Activated CD8-positive, alpha-beta T cell treated with anti-CD3 and anti-CD28 coated beads, Interleukin-2, amount 10 ng/mL, durations not matched to agents 7 days and 5 days (primary cell): ENCODE measurements at regions of chr3 and their contacts with region 1.

Region 1: GRCh38 chr3:143119009-143119914 is at the start of gene CHST2:
- DNase-seq: peak; percentile 79
- ATAC-seq: peak; percentile 84
- H3K4me3 Mint-ChIP-seq: peak within 1 kb of the TSS; percentile 85
- H3K27ac Mint-ChIP-seq: peak within 1 kb of the TSS; percentile 74
- H3K4me1 Mint-ChIP-seq: peaks cover 40% of the 10 kb centered on the region
- H3K27me3 Mint-ChIP-seq: peaks cover 10% of the 10 kb centered on the region
- total RNA-seq, gene CHST2: 2.3 to 2.4 TPM

Region 2: DNA sequence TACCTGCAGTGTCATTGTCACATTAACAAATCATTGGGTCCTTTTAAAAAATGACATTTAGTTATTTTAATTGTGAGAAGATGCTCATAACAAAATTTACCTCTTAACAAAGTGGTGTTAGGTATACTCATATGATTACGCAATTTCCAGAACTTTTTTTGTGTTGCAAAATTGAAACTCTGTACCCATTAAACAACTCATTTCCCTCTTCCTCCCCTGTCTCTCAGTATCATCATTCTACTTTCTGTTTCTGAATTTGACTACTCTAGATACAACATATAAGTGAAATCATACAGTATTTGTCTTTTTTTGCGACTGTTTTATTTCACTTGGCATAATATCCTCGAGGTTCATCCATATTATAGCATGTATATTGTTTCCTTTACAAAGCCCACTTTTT is 58.4 kb before region 1 on chr3:
- CTCF ChIA-PET with region 1: no interaction called
- POLR2A ChIA-PET with region 1: no interaction called
- DNase-seq: no peak
- ATAC-seq: peak; percentile 64
- H3K4me3 Mint-ChIP-seq: peak overlapping the region; percentile 1
- H3K27ac Mint-ChIP-seq: no peak overlapping the region
- H3K4me1 Mint-ChIP-seq: peaks cover 16% of the 10 kb centered on the region
- H3K27me3 Mint-ChIP-seq: no peaks in the 10 kb centered on the region

Region 3: GRCh38 chr3:143165211-143165610 is 45.9 kb after region 1 on chr3:
- CTCF ChIA-PET with region 1: interaction called, 23 read pairs
- POLR2A ChIA-PET with region 1: interaction called, 3 read pairs
- DNase-seq: no peak
- ATAC-seq: no peak
- H3K4me3 Mint-ChIP-seq: no peak overlapping the region
- H3K27ac Mint-ChIP-seq: peak overlapping the region; percentile 56
- H3K4me1 Mint-ChIP-seq: peaks cover 50% of the 10 kb centered on the region
- H3K27me3 Mint-ChIP-seq: no peaks in the 10 kb centered on the region

Region 4: DNA sequence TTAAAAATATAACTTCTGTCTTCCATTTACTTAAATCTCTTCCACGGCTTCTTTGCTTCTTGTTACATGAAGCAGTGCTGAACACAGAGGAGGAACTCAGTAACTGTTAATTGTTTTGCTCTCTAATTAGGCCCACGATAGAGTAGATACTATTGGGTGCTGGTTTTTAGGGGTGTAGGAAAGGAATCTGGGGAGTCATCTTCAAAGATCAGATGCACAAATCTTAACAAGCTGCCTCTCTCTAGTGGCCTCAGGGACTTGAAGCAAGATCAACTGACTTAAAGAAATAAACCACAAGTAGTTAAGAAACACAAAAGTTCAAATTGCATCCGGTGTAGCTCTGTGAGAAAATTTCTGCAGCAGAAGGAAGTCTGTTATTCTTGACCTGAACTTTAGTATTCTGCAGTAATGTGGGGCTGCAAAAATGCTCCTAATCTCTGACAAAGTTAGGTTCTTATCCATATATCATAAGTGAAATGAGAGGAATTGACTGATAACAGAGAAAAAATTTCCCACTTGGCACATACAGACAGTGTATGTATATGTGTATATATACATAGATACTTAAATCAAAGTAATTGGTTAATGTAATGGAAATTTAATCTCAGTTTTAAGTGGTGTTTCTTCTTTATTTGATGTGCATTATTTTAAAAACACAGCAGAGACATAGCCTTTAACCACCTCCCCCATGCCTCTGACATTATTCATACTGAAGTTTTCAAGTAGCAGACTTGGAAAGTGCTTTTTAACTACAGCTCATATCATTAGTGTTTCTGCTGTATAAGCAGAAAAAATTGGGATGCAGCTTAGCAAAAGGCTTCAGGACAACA is 52.1 kb after region 1 on chr3:
- CTCF ChIA-PET with region 1: interaction called, 23 read pairs
- POLR2A ChIA-PET with region 1: interaction called, 5 read pairs
- DNase-seq: peak; percentile 56
- ATAC-seq: peak; percentile 82
- H3K4me3 Mint-ChIP-seq: peak overlapping the region; percentile 62
- H3K27ac Mint-ChIP-seq: peak overlapping the region; percentile 96
- H3K4me1 Mint-ChIP-seq: peaks cover 56% of the 10 kb centered on the region
- H3K27me3 Mint-ChIP-seq: no peaks in the 10 kb centered on the region

Region 5: DNA sequence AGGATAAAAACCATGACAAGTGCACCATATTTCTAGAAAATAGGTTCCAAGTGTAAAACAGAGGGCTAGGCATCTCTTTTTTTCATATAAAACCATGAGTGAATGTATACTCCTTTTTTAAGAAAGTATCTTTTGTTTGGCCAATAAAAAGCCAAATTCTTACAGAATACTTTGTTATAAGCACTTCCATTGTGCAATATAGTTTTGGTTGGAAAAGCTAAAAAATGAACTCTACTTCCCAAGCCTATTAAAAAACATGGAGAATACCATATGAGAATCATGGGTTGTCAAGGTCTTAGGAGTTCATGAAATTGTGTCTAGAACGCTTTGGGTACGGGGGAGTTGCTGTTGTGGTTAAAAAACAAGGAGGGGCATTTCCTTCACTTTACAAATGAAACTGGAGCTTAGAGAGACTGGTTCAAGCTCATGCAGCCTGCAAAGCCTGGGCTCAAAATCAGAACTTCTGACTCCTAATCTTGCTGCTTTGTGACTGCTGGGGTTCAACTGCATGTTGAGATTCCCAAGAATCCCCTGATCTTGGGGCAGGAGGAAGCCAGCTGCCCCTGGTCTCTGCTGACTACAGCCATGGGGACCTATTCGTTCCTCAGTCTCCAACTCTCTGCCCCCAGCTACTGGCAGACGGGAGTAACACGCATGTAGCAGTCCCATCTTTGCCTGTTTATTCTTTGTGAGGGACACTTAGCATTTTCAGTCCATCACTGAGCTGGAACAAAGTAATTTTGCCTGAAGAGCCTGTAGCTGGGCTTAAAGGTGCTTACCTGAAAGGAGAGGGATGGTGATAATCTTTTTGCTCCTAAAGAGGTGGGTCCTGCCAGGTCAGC is 229.4 kb after region 1 on chr3:
- CTCF ChIA-PET with region 1: interaction called, 10 read pairs
- POLR2A ChIA-PET with region 1: interaction called, 4 read pairs
- DNase-seq: no peak
- ATAC-seq: peak; percentile 39
- H3K4me3 Mint-ChIP-seq: no peak overlapping the region
- H3K27ac Mint-ChIP-seq: no peak overlapping the region
- H3K4me1 Mint-ChIP-seq: peaks cover 19% of the 10 kb centered on the region
- H3K27me3 Mint-ChIP-seq: no peaks in the 10 kb centered on the region

Region 6: DNA sequence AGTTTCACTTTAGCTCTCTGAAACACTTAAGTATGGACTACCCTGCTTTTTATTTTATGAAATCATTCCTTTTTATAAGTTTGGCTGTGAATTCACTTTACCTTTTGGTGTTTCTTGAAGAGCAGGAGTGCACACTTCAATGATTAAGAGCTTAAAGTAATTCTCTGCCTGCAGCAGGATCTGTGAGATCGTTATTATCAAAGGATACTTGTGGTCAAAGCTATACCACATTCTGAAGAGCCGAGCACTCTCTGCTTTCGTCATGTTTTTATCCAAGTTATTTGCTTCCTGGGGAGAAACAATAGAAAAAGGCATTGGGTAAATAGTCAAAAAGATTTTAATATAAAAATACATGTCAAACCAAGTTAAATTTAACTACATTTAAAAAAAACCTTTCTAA is 244.0 kb after region 1 on chr3:
- CTCF ChIA-PET with region 1: interaction called, 11 read pairs
- POLR2A ChIA-PET with region 1: no interaction called
- DNase-seq: no peak
- ATAC-seq: peak; percentile 58
- H3K4me3 Mint-ChIP-seq: no peak overlapping the region
- H3K27ac Mint-ChIP-seq: no peak overlapping the region
- H3K4me1 Mint-ChIP-seq: peaks cover 24% of the 10 kb centered on the region
- H3K27me3 Mint-ChIP-seq: no peaks in the 10 kb centered on the region

Region 7: GRCh38 chr3:143674100-143674968 is 555.1 kb after region 1 on chr3:
- CTCF ChIA-PET with region 1: interaction called, 37 read pairs
- POLR2A ChIA-PET with region 1: no interaction called
- DNase-seq: peak; percentile 86
- ATAC-seq: peak; percentile 87
- H3K4me3 Mint-ChIP-seq: no peak overlapping the region
- H3K27ac Mint-ChIP-seq: peak overlapping the region; percentile 14
- H3K4me1 Mint-ChIP-seq: peaks cover 6% of the 10 kb centered on the region
- H3K27me3 Mint-ChIP-seq: no peaks in the 10 kb centered on the region